Activated B cell treated with CpG ODN at 0.5 μM for 24 hours (primary cell): ENCODE measurements at regions of chr12 and their contacts with region 1.

Region 1: GRCh38 chr12:123120452-123121166 is 30.3 kb downstream of the PITPNM2 start:
- DNase-seq: no peak
- ATAC-seq: peak; percentile 6
- H3K4me3 Mint-ChIP-seq: peak overlapping the region; percentile 61
- H3K27ac Mint-ChIP-seq: peak overlapping the region; percentile 82
- H3K4me1 Mint-ChIP-seq: peaks cover 64% of the 10 kb centered on the region
- H3K27me3 Mint-ChIP-seq: no peaks in the 10 kb centered on the region
- CTCF ChIP-seq: no peak

Region 2: DNA sequence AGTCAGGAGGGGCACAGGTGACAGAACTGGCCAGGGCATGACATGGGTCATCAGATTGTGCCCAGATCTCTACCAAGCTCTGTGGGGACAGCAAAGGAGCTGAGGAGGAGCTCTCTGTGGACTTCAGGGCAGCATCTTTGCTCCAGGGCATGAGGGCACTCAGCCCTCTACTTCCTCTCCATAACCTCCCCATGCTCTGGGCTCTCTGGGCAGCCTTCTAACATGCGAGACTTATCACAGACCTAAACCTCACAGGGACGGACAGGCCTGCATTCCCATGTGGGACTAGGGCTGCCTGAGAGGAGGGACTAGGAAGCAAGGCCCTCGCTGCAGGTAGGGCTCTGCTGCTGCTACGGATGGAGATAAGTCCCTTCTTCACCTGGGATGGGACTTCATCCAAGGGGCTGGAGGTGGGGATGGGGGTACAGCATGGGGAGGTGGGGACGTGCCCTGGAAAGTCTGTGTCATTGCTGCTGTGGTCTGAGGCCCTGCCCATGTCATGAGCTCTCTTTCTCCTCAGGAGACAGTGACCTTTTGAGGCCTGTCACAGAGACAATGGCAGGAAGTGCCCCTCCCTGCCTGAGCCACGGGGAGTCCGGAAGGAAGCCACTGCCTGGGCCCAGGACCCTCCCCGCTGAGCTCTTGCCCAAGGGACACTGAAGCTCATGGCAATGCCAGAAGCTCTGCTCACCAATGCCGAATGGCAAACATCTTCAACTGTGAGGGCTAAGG is 13.8 kb before region 1 on chr12:
- CTCF ChIA-PET with region 1: interaction called, 3 read pairs
- POLR2A ChIA-PET with region 1: interaction called, 15 read pairs
- intact Hi-C with region 1: loop called (anchors 1 kb)
- DNase-seq: peak; percentile 32
- ATAC-seq: peak; percentile 94
- H3K4me3 Mint-ChIP-seq: peak overlapping the region; percentile 61
- H3K27ac Mint-ChIP-seq: peak overlapping the region; percentile 89
- H3K4me1 Mint-ChIP-seq: peaks cover 36% of the 10 kb centered on the region
- H3K27me3 Mint-ChIP-seq: no peaks in the 10 kb centered on the region
- CTCF ChIP-seq: no peak